Activated CD4-positive, alpha-beta T cell treated with anti-CD3 and anti-CD28 coated beads for 36 hours (primary cell): ENCODE measurements at regions of chr12 and their contacts with region 1.

Region 1: GRCh38 chr12:9808504-9808903 is 18.8 kb upstream of the KLRF1 start:
- DNase-seq: no peak
- ATAC-seq: peak; percentile 57
- H3K4me3 Mint-ChIP-seq: no peak overlapping the region
- H3K27ac Mint-ChIP-seq: no peak overlapping the region
- H3K4me1 Mint-ChIP-seq: peaks cover 7% of the 10 kb centered on the region
- H3K27me3 Mint-ChIP-seq: peaks cover 8% of the 10 kb centered on the region

Region 2: GRCh38 chr12:9032202-9033178 is 776.0 kb before region 1 on chr12:
- CTCF ChIA-PET with region 1: no interaction called
- POLR2A ChIA-PET with region 1: no interaction called
- intact Hi-C with region 1: no loop called
- DNase-seq: no peak
- ATAC-seq: peak; percentile 43
- H3K4me3 Mint-ChIP-seq: no peak overlapping the region
- H3K27ac Mint-ChIP-seq: peak overlapping the region; percentile 32
- H3K4me1 Mint-ChIP-seq: peaks cover 68% of the 10 kb centered on the region
- H3K27me3 Mint-ChIP-seq: no peaks in the 10 kb centered on the region

Region 3: GRCh38 chr12:9851927-9852326 is 43.4 kb after region 1 on chr12:
- CTCF ChIA-PET with region 1: interaction called, 6 read pairs
- POLR2A ChIA-PET with region 1: interaction called, 3 read pairs
- intact Hi-C with region 1: loop called in 1 of 2 experiments (anchors 2 kb)
- DNase-seq: no peak
- ATAC-seq: no peak
- H3K4me3 Mint-ChIP-seq: no peak overlapping the region
- H3K27ac Mint-ChIP-seq: no peak overlapping the region
- H3K4me1 Mint-ChIP-seq: peaks cover 18% of the 10 kb centered on the region
- H3K27me3 Mint-ChIP-seq: no peaks in the 10 kb centered on the region